Prostate gland (tissue), 2 donors: ENCODE measurements at regions of chr22 and their contacts with region 1.

Region 1: GRCh38 chr22:30289134-30289979 is at the start of gene CASTOR1:
- DNase-seq: peak; percentile 99
- H3K4me3 ChIP-seq: peak within 1 kb of the TSS; percentile 51 to 89
- H3K27ac ChIP-seq: peak within 1 kb of the TSS; percentile 88 to 95
- H3K4me1 ChIP-seq: peaks cover 21% of the 10 kb centered on the region
- H3K27me3 ChIP-seq: no peaks in the 10 kb centered on the region
- CTCF ChIP-seq: peak in 2 of 4 experiments; percentile 15 to 30
- POLR2A ChIP-seq: peak; percentile 91
- total RNA-seq, gene CASTOR1: 27.2 to 33.2 TPM

Region 2: GRCh38 chr22:30159561-30160353 is 129.6 kb before region 1 on chr22:
- intact Hi-C with region 1: no loop called
- DNase-seq: peak; percentile 48
- H3K4me3 ChIP-seq: no peak overlapping the region
- H3K27ac ChIP-seq: no peak overlapping the region
- H3K4me1 ChIP-seq: no peaks in the 10 kb centered on the region
- H3K27me3 ChIP-seq: no peaks in the 10 kb centered on the region
- CTCF ChIP-seq: no peak
- POLR2A ChIP-seq: no peak

Region 3: DNA sequence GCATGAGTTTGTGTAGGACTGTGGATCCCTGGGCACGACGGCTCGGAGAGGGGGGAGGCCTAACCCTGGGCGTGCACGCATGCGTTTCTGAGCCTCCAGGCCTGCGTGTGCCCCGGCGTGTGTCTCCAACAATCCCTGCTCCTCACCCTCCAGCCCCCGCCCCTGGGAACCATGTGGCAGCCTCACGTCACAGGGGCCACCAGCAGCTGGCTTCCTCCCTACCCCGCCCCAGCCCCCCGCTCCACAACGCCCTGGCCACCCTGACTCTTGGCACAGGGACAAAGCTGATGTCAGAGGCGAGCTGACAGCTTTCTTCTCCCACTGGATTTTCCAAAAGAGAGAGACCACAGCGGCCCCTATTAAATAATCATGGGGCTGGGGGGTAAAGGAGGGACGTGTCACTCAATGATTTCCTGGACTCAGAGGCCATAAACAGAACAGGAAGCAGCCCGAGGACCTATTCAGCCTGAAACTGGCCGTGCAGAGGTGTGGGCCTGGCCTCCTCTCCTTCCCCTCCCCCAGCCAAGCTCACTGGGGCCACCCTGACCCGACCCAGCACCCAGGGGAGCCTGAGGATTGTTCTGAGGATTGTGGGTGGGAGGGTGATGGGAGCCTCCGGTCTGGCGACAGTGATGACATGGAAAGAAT is 36.0 kb before region 1 on chr22:
- intact Hi-C with region 1: no loop called
- DNase-seq: no peak
- H3K4me3 ChIP-seq: no peak overlapping the region
- H3K27ac ChIP-seq: peak overlapping the region; percentile 0 to 36
- H3K4me1 ChIP-seq: peaks cover 3% of the 10 kb centered on the region
- H3K27me3 ChIP-seq: no peaks in the 10 kb centered on the region
- CTCF ChIP-seq: no peak
- POLR2A ChIP-seq: no peak

Region 4: DNA sequence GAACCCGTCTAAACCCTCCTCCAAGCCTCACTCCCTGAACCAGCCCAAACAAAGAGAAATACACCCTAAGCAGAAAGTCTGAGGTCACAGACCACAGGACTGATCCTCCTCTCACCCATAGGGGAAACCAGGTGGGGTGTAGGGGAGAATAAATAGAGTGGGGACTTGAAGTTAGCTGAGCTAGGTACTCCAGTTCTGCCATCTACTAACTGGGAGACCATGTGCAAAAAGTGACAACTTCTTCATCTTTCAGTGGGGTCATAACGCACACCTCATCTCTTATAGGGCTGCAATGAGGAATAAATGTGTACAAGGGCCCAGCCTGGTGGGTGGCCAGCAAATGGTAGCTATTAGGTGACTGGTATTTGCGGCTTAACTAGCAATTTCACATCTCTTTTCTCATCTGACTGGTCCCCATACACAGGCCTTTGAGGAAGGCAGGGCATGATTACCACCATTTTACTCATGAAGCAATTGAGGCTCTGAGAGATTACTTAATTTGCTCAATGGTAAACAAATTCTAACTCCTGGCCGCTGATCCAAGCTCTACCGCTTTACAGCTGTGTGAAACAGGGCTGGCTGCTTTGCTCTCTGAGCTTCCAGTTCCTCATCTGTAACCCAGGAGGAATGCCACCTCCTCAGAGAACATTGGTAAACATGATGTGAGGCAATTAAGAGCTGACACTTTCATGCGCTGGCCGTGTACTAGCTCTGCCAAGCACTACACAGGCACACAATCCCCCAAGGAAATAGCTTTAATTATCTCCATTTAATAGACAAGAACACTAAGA is 20.8 kb after region 1 on chr22:
- intact Hi-C with region 1: loop called (anchors 2 kb)
- DNase-seq: peak; percentile 72
- H3K4me3 ChIP-seq: no peak overlapping the region
- H3K27ac ChIP-seq: peak overlapping the region; percentile 76 to 91
- H3K4me1 ChIP-seq: peaks cover 65% of the 10 kb centered on the region
- H3K27me3 ChIP-seq: no peaks in the 10 kb centered on the region
- CTCF ChIP-seq: no peak
- POLR2A ChIP-seq: no peak

Region 5: DNA sequence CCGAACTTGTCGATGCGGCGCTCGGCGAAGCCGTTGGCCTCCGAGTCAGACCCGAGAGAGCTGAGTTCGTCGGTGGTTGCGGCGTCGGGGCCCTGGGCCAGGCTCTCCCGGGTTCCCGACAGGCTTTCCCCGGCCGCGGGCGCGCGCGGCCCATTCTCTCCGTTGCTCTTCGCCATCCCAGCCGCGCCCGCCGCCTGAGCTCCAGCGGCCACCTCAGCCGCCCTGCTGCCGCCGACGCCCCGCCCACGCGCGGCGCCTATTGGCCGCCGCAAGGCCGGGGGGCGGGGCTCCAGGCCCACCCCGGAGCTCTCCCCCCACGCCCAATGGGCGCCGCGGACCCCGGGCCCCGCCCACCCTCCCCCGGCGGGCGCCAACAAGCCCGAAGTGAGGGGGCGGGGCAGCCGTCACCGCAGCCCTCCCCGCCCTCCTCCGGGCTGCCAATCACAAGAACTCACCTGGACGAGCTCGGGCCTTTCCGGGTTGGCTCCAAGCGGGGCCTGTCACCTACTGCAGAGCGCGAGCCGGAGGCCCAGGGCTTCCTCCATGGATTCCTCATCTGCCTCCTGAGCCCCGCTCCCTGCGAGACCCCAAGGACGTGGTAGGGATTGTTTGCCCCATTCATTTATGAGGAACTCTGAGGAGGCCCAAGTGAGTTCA is 37.5 kb after region 1 on chr22 and contains the start of gene TBC1D10A:
- intact Hi-C with region 1: loop called (anchors 2 kb)
- DNase-seq: peak; percentile 96
- H3K4me3 ChIP-seq: peak within 1 kb of the TSS; percentile 86 to 98
- H3K27ac ChIP-seq: peak within 1 kb of the TSS; percentile 92 to 94
- H3K4me1 ChIP-seq: peaks cover 5% of the 10 kb centered on the region
- H3K27me3 ChIP-seq: no peaks in the 10 kb centered on the region
- CTCF ChIP-seq: peak in 1 of 4 experiments; percentile 16
- POLR2A ChIP-seq: peak; percentile 97
- total RNA-seq, gene TBC1D10A: 46.1 to 51.2 TPM

Region 6: DNA sequence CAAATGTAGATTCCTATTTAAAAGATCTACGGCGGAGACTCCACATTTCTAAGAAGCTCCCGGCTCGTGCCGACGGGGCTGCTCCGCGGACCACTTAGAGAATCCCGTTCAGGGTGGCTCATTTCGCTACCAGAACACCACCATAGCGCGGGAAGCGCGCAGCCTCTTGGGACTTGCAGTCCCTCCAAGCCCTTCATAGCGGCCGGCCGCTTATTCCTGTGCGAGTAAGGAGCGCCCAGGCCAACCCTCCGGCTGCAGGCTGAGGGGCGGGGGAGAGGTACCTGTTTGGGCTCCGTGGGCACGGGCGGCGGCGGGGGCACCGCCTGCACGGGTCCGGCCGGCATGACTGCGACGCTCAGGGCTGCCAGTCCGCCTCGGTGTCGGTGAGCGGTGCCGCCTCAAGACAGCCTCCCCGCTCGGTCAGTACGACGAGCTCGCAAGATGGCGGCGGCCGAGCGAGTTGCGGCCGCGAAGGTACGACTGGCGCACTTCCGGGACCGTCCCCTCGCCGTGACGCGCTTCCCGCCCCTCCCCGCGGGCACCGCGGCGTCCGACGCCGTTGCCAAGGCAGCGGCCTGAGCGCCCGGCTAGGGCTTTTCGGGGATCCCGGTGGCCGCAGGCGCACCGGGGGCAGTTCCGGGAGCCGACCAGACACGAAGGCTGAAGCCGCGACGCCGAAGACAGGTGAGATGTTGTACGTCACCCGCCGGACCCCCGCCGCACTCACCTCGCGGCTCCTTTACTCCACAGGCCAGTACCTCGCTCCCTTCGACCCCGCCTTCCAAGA is 67.3 kb after region 1 on chr22 and contains the starts of genes CCDC157 and SF3A1:
- intact Hi-C with region 1: loop called (anchors 2 kb)
- DNase-seq: peak; percentile 85
- H3K4me3 ChIP-seq: peak within 1 kb of the TSS; percentile 58 to 68
- H3K27ac ChIP-seq: peak within 1 kb of the TSS; percentile 93
- H3K4me1 ChIP-seq: peaks cover 10% of the 10 kb centered on the region
- H3K27me3 ChIP-seq: no peaks in the 10 kb centered on the region
- CTCF ChIP-seq: peak in 2 of 4 experiments; percentile 29
- POLR2A ChIP-seq: peak; percentile 85
- total RNA-seq, gene CCDC157: 3.5 to 28.6 TPM
- total RNA-seq, gene SF3A1: 108 to 134 TPM